HepG2 (cell line): ENCODE measurements at regions of chr17 and their contacts with region 1.

Region 1: GRCh38 chr17:19648475-19649406 is at the start of gene ALDH3A2:
- DNase-seq: peak; percentile 95
- ATAC-seq: peak; percentile 94
- H3K4me3 ChIP-seq: peak within 1 kb of the TSS; percentile 86 to 89 (median 86)
- H3K27ac ChIP-seq: peak within 1 kb of the TSS; percentile 88
- H3K4me1 ChIP-seq: peaks cover 71% of the 10 kb centered on the region
- H3K27me3 ChIP-seq: no peaks in the 10 kb centered on the region; a peak in 1 of 5 replicates
- CTCF ChIP-seq: peak; percentile 82
- EP300 ChIP-seq: peak; percentile 59 to 88; a peak in 3 of 4 replicates
- POLR2A ChIP-seq: peak; percentile 48 to 94; a peak in 3 of 4 replicates
- RAD21 ChIP-seq: peak; percentile 94
- total RNA-seq, gene ALDH3A2: 180 and 245 TPM in 2 replicates

Region 2: DNA sequence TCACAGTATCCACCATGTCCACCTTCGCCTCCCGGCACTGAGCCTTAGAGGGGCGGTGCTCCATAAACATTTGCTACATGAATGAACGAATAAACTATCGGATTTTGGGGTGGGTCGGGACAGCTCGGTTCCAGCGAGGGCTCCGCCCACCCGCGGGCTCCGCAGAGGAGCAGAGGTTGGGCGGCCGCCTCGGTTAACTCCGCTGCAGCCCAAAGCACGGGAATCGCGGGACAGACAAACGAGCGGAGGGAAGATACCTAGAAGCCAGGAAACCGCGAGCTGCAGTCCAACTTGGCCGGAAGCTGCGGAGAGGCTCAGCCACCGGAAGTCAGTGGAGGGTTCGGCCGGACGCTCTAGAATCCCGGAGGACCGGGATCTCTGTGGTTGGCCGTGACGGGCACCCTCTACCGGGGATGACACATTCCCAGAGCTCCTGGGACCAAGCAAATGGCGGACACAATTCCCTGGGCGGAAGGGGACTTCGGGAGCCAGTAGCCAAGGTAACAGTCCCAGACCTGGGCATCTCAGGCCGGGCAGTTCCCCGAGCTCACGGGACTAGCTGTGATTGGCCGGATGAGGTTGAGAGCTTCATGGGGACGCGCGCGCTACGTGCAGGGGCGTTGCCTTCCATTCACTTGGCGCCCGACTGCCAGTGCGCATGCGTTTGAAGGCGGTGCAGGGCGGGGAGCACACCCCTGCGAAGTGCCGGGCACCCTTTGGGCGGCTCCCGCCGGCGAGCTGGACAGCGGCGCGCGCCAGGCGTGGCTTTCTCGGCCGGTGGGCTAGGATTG is 270.9 kb before region 1 on chr17:
- CTCF ChIA-PET with region 1: no interaction called
- POLR2A ChIA-PET with region 1: interaction called, 13 read pairs
- in situ Hi-C with region 1: no loop called
- intact Hi-C with region 1: no loop called
- DNase-seq: peak; percentile 98
- ATAC-seq: peak; percentile 89
- H3K4me3 ChIP-seq: peak overlapping the region; percentile 82 to 96 (median 87)
- H3K27ac ChIP-seq: peak overlapping the region; percentile 93
- H3K4me1 ChIP-seq: peaks cover 33% of the 10 kb centered on the region
- H3K27me3 ChIP-seq: peaks cover 0 to 2% of the 10 kb centered on the region in 2 experiments; a peak in 1 of 5 replicates
- CTCF ChIP-seq: peak; percentile 56
- EP300 ChIP-seq: no peak
- POLR2A ChIP-seq: peak; percentile 84 to 86
- RAD21 ChIP-seq: peak; percentile 49; the same call in 1 of the 2 replicates

Region 3: DNA sequence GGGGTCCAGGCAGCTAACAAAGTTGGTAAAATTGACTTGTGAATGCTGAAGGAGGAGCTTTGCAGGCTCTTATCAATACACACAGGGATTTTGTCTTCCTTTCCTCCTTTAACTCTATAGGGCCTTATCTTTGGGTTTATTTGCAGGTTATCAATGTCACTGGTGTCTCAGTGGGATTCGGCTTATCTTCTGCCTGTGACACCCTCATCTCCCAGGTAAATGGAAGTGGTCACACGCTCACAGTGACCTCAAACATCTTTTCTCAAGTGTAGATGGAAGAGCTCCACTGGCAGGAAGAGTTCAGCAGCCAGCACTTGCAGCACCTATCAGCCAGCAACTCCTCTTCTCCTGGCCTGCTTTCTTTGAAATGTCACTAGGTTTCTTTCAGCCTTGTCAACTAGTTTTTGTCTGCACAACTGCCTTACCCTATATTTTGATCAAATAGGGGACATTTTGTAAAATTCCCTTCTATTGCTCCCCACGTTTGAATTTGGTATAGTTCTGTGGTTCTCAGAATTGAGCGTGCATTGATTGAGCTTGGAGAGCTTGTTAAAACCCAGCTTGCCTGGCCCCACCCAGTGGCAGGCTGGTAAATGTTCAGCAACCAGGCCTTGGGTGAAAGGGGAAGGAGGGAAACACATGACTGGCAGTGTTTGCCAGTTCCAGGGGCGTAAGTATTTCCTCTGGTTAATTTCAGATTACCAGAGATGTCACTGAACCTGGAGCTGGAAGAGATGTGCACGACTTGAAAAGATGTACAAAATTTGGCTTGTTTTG is 102.3 kb before region 1 on chr17:
- CTCF ChIA-PET with region 1: no interaction called
- POLR2A ChIA-PET with region 1: interaction called, 31 read pairs
- in situ Hi-C with region 1: no loop called
- intact Hi-C with region 1: loop called (anchors 2 kb)
- DNase-seq: no peak
- ATAC-seq: no peak
- H3K4me3 ChIP-seq: no peak overlapping the region
- H3K27ac ChIP-seq: peak overlapping the region; percentile 28
- H3K4me1 ChIP-seq: peaks cover 54% of the 10 kb centered on the region
- H3K27me3 ChIP-seq: no peaks in the 10 kb centered on the region
- CTCF ChIP-seq: peak; percentile 52
- EP300 ChIP-seq: no peak
- POLR2A ChIP-seq: no peak
- RAD21 ChIP-seq: 0 out of 2 replicates have a peak, but pooled peaks have one; percentile 52

Region 4: GRCh38 chr17:19621697-19622096 is 27.0 kb before region 1 on chr17:
- CTCF ChIA-PET with region 1: no interaction called
- POLR2A ChIA-PET with region 1: no interaction called
- in situ Hi-C with region 1: no loop called
- intact Hi-C with region 1: no loop called
- DNase-seq: no peak
- ATAC-seq: no peak
- H3K4me3 ChIP-seq: no peak overlapping the region
- H3K27ac ChIP-seq: no peak overlapping the region
- H3K4me1 ChIP-seq: peaks cover 20% of the 10 kb centered on the region
- H3K27me3 ChIP-seq: no peaks in the 10 kb centered on the region
- CTCF ChIP-seq: no peak
- EP300 ChIP-seq: no peak
- POLR2A ChIP-seq: no peak
- RAD21 ChIP-seq: no peak

Region 5: DNA sequence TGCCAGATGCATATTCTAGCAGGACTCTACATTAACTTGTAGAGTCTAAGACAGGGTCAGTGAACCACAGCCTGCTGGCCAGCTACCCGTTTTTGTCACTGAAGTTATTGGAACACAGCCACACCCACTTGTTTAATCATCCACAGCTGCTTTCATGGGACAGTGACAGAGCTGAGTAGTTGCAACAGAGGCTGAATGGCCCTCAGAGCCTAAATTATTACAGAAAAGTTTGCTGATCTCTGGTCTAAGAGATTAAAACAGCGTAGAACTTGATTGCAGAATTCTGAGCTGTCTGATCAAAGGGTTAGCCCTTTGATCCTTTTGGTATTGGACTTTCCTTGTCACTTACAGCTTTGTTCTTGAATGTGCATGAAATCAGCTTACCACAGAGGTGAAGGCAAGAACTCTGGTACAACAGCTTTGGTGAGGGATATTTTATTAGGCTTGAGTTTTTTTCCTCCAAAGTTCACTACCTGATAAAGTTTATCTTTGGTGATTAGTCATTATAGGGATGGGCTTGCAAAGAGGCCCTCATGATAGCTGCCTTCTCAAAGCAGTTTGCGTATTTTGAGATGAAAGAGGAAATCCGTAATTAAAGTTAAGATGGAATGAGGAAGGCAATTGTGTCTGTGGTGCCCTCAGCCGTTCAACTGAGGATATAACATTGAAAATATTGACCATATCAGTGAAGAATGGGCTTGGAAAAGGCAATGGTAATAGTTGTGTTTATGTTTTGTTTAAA is 23.4 kb after region 1 on chr17:
- CTCF ChIA-PET with region 1: interaction called, 7 read pairs
- POLR2A ChIA-PET with region 1: interaction called, 133 read pairs
- in situ Hi-C with region 1: no loop called
- intact Hi-C with region 1: loop called (anchors 1 kb)
- DNase-seq: peak; percentile 94
- ATAC-seq: peak; percentile 91
- H3K4me3 ChIP-seq: no peak overlapping the region
- H3K27ac ChIP-seq: peak overlapping the region; percentile 67
- H3K4me1 ChIP-seq: peaks cover 54% of the 10 kb centered on the region
- H3K27me3 ChIP-seq: no peaks in the 10 kb centered on the region
- CTCF ChIP-seq: peak; percentile 55
- EP300 ChIP-seq: peak in 1 of 2 experiments; percentile 93; a peak in 1 of 4 replicates
- POLR2A ChIP-seq: no peak
- RAD21 ChIP-seq: peak; percentile 59; the same call in 1 of the 2 replicates

Region 6: DNA sequence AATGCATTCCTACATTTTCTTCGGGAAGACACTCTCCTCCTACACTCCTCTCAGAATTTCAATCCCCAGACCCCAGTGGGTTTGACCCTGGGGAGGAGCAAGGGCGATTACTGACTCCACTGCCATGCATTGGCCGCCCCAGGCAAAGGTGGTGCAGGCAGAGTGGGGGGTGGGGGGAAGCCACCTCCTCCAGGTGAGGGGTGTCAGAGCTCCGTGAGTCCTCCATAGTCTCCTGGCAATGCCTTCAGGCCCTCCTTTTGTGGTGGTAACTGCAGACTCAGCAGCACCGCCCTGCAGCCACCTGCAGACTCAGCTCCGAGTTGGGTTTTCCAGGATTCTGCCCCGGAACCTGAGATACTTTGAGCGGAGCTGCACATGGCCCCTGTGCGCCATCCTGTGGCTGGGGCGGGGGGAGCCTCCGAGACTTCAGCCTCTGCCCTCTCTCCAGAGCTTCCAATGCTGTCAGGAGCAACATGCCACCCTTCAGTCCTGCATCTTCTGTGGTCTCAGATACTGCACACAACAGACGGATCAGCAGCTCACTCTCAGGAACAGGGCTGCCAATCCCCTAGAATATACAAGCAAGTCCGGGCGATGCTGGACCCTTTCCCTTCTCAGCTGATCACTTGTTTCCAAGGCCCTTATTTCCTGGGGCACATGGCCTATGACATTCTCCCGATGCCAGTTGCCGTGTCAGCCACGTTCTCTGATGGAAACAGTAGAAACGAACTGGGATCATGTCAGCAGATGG is 70.0 kb after region 1 on chr17:
- CTCF ChIA-PET with region 1: no interaction called
- POLR2A ChIA-PET with region 1: interaction called, 17 read pairs
- in situ Hi-C with region 1: no loop called
- intact Hi-C with region 1: loop called (anchors 10 kb)
- DNase-seq: peak; percentile 38
- ATAC-seq: peak; percentile 60
- H3K4me3 ChIP-seq: no peak overlapping the region; a peak in 1 of 6 replicates
- H3K27ac ChIP-seq: no peak overlapping the region
- H3K4me1 ChIP-seq: peaks cover 71% of the 10 kb centered on the region
- H3K27me3 ChIP-seq: peaks cover 0 to 4% of the 10 kb centered on the region in 2 experiments; a peak in 2 of 5 replicates
- CTCF ChIP-seq: peak; percentile 84
- EP300 ChIP-seq: no peak
- POLR2A ChIP-seq: no peak
- RAD21 ChIP-seq: peak; percentile 85

Region 7: DNA sequence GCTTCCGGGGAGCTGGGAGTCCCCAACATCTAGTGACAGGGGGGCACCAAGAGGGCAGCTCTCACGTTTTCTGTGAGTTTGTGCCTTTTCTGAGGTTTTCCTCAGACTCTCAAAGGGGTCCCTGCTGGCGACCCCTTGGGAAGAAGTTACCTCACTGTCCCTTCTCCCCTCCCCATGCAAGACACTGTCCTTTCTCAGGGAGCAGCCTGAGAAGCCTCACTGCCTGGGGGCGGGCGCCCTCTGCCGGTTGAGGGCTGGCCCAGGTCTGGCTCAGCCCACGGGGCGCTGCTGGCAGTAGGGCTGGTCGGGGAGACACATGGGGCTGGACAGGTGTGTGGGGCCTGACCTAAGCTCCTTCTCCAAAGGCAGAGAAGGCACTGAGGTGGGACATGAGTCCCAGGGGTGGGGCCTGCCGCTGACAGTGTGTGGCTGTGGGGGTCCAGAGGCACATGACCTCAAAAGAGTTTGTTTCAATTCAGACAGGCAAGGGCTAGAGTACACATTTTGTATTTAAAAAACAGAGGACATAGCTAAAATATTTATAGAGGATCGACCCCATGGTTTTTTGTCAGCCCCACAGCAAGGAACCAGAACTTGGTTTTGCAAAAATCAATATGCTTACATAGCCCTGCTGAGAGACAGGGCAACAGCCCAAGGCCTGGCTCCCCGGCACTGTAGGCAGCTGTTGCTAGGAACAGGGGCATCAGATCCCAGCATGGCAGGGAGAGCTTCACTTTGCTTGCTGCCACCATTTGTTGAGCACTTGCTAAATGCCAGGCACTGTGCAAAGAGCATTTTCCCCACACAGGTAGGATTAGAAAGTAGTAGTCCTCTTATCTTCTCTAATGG is 117.9 kb after region 1 on chr17:
- CTCF ChIA-PET with region 1: no interaction called
- POLR2A ChIA-PET with region 1: interaction called, 19 read pairs
- in situ Hi-C with region 1: no loop called
- intact Hi-C with region 1: loop called (anchors 10 kb)
- DNase-seq: peak; percentile 22
- ATAC-seq: peak; percentile 94
- H3K4me3 ChIP-seq: no peak overlapping the region; a peak in 1 of 6 replicates
- H3K27ac ChIP-seq: no peak overlapping the region
- H3K4me1 ChIP-seq: peaks cover 29% of the 10 kb centered on the region
- H3K27me3 ChIP-seq: peaks cover 0 to 9% of the 10 kb centered on the region in 2 experiments; a peak in 2 of 5 replicates
- CTCF ChIP-seq: peak; percentile 99
- EP300 ChIP-seq: no peak
- POLR2A ChIP-seq: no peak
- RAD21 ChIP-seq: peak; percentile 93